B cell (primary cell): ENCODE measurements at regions of chr17 and their contacts with region 1.

Region 1: GRCh38 chr17:10226930-10227685 is 28.7 kb upstream of the GAS7 start:
- DNase-seq: peak; percentile 67
- ATAC-seq: peak; percentile 82
- H3K4me3 ChIP-seq: no peak overlapping the region
- H3K4me3 Mint-ChIP-seq: no peak overlapping the region
- H3K27ac ChIP-seq: no peak overlapping the region
- H3K27ac Mint-ChIP-seq: no peak overlapping the region
- H3K4me1 ChIP-seq: no peaks in the 10 kb centered on the region
- H3K4me1 Mint-ChIP-seq: peaks cover 2% of the 10 kb centered on the region
- H3K27me3 ChIP-seq: no peaks in the 10 kb centered on the region
- H3K27me3 Mint-ChIP-seq: no peaks in the 10 kb centered on the region
- CTCF ChIP-seq: peak; percentile 87

Region 2: GRCh38 chr17:9924735-9925191 is 302.3 kb before region 1 on chr17:
- CTCF ChIA-PET with region 1: interaction called, 21 read pairs
- POLR2A ChIA-PET with region 1: no interaction called
- intact Hi-C with region 1: loop called (anchors 1 kb)
- DNase-seq: peak; percentile 75
- ATAC-seq: peak; percentile 79
- H3K4me3 ChIP-seq: no peak overlapping the region
- H3K4me3 Mint-ChIP-seq: no peak overlapping the region
- H3K27ac ChIP-seq: no peak overlapping the region
- H3K27ac Mint-ChIP-seq: no peak overlapping the region
- H3K4me1 ChIP-seq: no peaks in the 10 kb centered on the region
- H3K4me1 Mint-ChIP-seq: peaks cover 3% of the 10 kb centered on the region
- H3K27me3 ChIP-seq: no peaks in the 10 kb centered on the region
- H3K27me3 Mint-ChIP-seq: no peaks in the 10 kb centered on the region
- CTCF ChIP-seq: peak; percentile 95

Region 3: GRCh38 chr17:9971991-9972599 is 255.0 kb before region 1 on chr17:
- CTCF ChIA-PET with region 1: interaction called, 89 read pairs
- POLR2A ChIA-PET with region 1: interaction called, 3 read pairs
- intact Hi-C with region 1: no loop called
- DNase-seq: no peak
- ATAC-seq: no peak
- H3K4me3 ChIP-seq: no peak overlapping the region
- H3K4me3 Mint-ChIP-seq: no peak overlapping the region
- H3K27ac ChIP-seq: no peak overlapping the region
- H3K27ac Mint-ChIP-seq: no peak overlapping the region
- H3K4me1 ChIP-seq: no peaks in the 10 kb centered on the region
- H3K4me1 Mint-ChIP-seq: no peaks in the 10 kb centered on the region
- H3K27me3 ChIP-seq: no peaks in the 10 kb centered on the region
- H3K27me3 Mint-ChIP-seq: no peaks in the 10 kb centered on the region
- CTCF ChIP-seq: no peak

Region 4: GRCh38 chr17:9982159-9982558 is 244.9 kb before region 1 on chr17:
- CTCF ChIA-PET with region 1: interaction called, 8 read pairs
- POLR2A ChIA-PET with region 1: no interaction called
- intact Hi-C with region 1: loop called (anchors 5 kb)
- DNase-seq: no peak
- ATAC-seq: no peak
- H3K4me3 ChIP-seq: no peak overlapping the region
- H3K4me3 Mint-ChIP-seq: no peak overlapping the region
- H3K27ac ChIP-seq: no peak overlapping the region
- H3K27ac Mint-ChIP-seq: no peak overlapping the region
- H3K4me1 ChIP-seq: no peaks in the 10 kb centered on the region
- H3K4me1 Mint-ChIP-seq: peaks cover 5% of the 10 kb centered on the region
- H3K27me3 ChIP-seq: no peaks in the 10 kb centered on the region
- H3K27me3 Mint-ChIP-seq: no peaks in the 10 kb centered on the region
- CTCF ChIP-seq: no peak

Region 5: GRCh38 chr17:10041916-10042588 is 185.1 kb before region 1 on chr17:
- CTCF ChIA-PET with region 1: interaction called, 3 read pairs
- POLR2A ChIA-PET with region 1: no interaction called
- intact Hi-C with region 1: loop called (anchors 5 kb)
- DNase-seq: peak; percentile 28
- ATAC-seq: peak; percentile 72
- H3K4me3 ChIP-seq: no peak overlapping the region
- H3K4me3 Mint-ChIP-seq: peak overlapping the region; percentile 8
- H3K27ac ChIP-seq: no peak overlapping the region
- H3K27ac Mint-ChIP-seq: peak overlapping the region; percentile 35
- H3K4me1 ChIP-seq: peaks cover 19 to 38% of the 10 kb centered on the region in 2 donors
- H3K4me1 Mint-ChIP-seq: peaks cover 45% of the 10 kb centered on the region
- H3K27me3 ChIP-seq: no peaks in the 10 kb centered on the region
- H3K27me3 Mint-ChIP-seq: no peaks in the 10 kb centered on the region
- CTCF ChIP-seq: no peak

Region 6: DNA sequence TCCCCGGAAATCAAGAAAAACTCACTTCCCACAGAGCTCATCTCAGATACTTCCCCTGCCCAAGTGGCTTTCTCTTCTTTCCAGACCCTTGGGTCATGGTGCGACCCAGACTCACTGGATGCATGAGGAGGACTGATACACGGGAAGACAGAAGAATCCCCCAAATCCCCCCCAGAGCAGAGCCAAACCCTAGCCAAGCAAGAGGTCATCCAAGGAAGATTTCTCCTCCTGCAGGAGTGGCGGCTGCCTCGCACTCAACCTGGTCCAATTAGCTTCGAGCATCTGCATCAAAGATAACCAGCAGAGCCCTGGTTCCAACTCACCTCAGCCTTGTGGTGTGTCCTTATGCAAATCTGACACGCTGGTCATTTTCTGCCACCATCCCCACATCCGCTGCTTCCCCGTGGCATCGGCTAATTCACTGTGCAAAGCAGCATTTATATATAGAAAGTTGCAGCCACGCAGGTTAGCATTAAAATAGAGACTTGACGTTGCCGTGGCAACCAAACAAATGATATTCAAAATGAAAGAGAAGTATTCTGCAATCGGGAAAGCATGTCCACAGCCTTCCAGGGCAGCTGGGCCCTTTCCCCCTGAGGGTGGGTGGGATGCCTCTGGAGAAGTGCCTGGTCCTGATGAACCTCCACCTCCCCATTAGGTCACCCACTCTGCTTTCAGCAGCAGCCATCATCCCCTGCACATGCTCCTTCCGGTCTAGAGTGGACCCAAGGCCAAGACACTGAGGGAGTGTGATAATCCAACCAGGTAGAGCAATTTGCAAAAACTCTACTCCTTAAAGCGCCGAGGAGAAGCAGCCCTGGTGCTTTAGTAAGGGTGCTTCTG is 167.5 kb before region 1 on chr17:
- CTCF ChIA-PET with region 1: interaction called, 17 read pairs
- POLR2A ChIA-PET with region 1: no interaction called
- intact Hi-C with region 1: no loop called
- DNase-seq: peak; percentile 64
- ATAC-seq: peak; percentile 39
- H3K4me3 ChIP-seq: no peak overlapping the region
- H3K4me3 Mint-ChIP-seq: peak overlapping the region; percentile 55
- H3K27ac ChIP-seq: peak overlapping the region in 1 of 2 donors; percentile 32
- H3K27ac Mint-ChIP-seq: peak overlapping the region; percentile 42
- H3K4me1 ChIP-seq: peaks cover 31 to 40% of the 10 kb centered on the region in 2 donors
- H3K4me1 Mint-ChIP-seq: peaks cover 55% of the 10 kb centered on the region
- H3K27me3 ChIP-seq: no peaks in the 10 kb centered on the region
- H3K27me3 Mint-ChIP-seq: peaks cover 2% of the 10 kb centered on the region
- CTCF ChIP-seq: no peak

Region 7: GRCh38 chr17:10210151-10210930 is 16.8 kb before region 1 on chr17:
- CTCF ChIA-PET with region 1: interaction called, 11 read pairs
- POLR2A ChIA-PET with region 1: no interaction called
- intact Hi-C with region 1: no loop called
- DNase-seq: no peak
- ATAC-seq: no peak
- H3K4me3 ChIP-seq: no peak overlapping the region
- H3K4me3 Mint-ChIP-seq: no peak overlapping the region
- H3K27ac ChIP-seq: no peak overlapping the region
- H3K27ac Mint-ChIP-seq: no peak overlapping the region
- H3K4me1 ChIP-seq: no peaks in the 10 kb centered on the region
- H3K4me1 Mint-ChIP-seq: no peaks in the 10 kb centered on the region
- H3K27me3 ChIP-seq: no peaks in the 10 kb centered on the region
- H3K27me3 Mint-ChIP-seq: no peaks in the 10 kb centered on the region
- CTCF ChIP-seq: no peak

Region 8: DNA sequence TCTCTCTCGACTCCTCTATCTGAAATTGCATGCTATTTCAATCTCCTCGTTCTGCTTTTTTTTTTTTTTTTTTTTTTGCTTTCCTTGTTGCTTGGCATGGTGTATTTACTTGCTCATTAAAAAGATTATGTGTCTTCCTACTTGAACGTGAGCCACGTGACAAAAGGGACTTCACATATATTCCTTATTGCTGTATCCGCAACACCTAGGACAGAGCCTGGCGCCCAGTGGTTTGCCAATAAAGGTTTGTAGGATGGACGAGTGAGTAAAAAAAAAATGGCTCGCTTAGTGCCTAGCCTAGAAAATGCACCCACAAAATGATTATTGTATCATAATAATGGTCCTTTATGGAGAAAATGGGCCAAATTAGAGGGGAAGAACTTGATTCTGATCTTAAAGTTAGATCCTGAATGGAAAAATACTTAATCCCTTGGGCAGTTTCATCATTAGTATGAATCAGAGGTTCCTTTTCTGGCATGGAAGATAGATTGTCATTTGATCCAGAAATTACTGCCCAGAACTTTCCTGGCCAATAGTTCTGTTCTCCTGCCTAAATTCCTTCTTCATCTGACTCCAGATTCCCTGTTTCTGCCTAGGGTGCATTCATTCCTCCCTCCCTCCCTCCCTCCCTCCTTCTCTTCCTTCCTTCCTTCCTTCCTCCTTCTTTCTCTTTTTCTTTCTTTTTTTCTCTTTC is 516.4 kb after region 1 on chr17:
- CTCF ChIA-PET with region 1: no interaction called
- POLR2A ChIA-PET with region 1: no interaction called
- intact Hi-C with region 1: no loop called
- DNase-seq: no peak
- ATAC-seq: no peak
- H3K4me3 ChIP-seq: no peak overlapping the region
- H3K4me3 Mint-ChIP-seq: no peak overlapping the region
- H3K27ac ChIP-seq: no peak overlapping the region
- H3K27ac Mint-ChIP-seq: no peak overlapping the region
- H3K4me1 ChIP-seq: no peaks in the 10 kb centered on the region
- H3K4me1 Mint-ChIP-seq: no peaks in the 10 kb centered on the region
- H3K27me3 ChIP-seq: peaks cover 0 to 2% (median 0%) of the 10 kb centered on the region in 4 experiments
- H3K27me3 Mint-ChIP-seq: peaks cover 10% of the 10 kb centered on the region
- CTCF ChIP-seq: no peak